MCF 10A (cell line): ENCODE measurements at regions of chr15 and their contacts with region 1.

Region 1: DNA sequence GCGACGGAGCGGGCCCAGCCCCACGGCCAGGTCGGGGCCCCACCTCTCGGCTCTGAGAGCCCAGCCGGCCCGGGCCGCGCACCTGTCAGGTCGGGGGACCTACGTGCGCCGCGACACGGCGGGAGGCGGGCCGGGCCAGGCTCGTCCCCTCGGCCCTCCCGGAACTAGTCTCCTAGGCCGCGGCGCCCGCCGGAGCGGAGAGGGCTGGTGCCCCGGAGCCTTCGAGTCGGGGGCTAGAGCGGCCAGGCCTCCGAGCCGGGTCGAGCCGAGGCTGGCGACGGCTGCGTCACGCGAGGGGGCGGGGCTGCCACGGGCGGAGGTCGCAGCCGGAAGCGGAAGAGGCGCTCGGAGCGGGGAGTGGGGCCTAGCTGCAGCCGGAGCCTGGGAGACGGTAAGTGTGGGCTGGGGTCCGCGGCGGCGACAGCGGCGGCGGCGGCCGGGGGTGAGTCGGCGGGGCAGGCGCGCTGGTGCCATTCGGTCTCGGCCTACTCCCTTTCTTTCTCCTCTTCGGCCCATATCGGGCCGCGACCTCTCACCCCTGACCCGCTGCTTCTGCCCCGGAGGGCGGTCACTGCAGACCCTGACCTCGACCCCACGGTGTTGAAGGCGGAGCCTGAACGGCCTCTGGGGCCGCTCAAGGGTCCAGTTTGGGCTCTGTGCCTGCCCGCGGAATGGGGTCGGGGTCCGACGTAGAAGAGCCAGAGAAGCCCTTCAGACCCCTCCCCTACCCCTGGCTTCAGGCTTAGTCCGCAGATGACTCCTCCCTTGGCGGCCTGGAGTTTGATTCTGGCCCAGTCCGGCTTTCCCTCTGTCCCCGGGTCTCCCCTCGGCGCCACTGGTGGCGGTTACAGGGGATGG is at the start of gene CLK3:
- DNase-seq: peak; percentile 92
- H3K4me3 Mint-ChIP-seq: peak within 1 kb of the TSS; percentile 84
- H3K27ac Mint-ChIP-seq: peak within 1 kb of the TSS; percentile 95
- H3K4me1 Mint-ChIP-seq: peaks cover 31% of the 10 kb centered on the region
- H3K27me3 Mint-ChIP-seq: peaks cover 7% of the 10 kb centered on the region
- CTCF ChIP-seq: no peak
- total RNA-seq, gene CLK3: 57.8 and 62.8 TPM in 2 replicates

Region 2: DNA sequence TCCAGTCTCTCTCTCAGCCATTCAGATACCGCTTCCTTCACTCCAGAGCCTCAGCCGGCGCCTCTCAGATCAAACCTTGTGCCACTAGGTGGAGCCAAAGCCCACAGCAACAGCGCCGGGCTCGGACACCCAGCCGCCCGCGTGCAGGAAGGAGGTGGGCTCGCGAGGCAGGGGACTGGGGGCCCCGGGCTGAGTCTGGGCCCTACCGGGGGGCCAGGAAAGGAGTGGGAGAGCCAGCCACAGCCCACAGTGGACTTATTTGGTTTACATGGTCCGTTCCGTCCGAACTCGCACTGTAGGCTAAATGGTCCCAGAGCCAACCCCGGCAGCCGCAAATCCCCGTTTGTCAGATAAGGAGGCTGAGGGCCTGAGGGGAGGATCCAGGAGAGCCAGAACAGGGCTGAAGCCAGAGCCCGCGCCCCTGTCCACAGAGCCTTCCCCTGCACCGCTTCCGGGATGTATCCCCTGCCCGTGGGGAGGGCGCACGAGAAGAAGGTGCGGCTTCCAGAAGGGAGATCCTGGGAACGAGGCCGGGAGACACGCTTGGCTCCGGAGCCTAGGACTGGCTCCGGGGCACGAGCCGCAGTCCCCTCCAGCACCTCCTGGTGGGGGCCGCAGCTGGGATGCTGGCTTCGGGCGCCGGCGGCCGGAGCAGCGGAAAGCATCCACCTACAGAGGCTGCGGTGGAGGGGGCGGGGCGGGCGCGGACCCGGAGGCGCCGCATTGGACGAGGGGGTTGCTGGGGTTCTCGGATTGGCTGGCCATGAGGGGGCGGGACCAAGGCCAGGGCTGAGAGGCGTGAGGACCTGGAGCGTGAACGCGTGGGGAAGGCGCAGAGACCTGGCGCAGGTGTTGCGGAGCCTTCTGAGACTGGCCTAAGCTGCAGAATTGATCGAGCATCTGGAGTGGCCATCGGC is 241.7 kb before region 1 on chr15:
- CTCF ChIA-PET with region 1: interaction called, 10 read pairs
- POLR2A ChIA-PET with region 1: no interaction called
- intact Hi-C with region 1: loop called (anchors 2 kb)
- DNase-seq: peak; percentile 92
- H3K4me3 Mint-ChIP-seq: peak overlapping the region; percentile 78
- H3K27ac Mint-ChIP-seq: no peak overlapping the region
- H3K4me1 Mint-ChIP-seq: no peaks in the 10 kb centered on the region
- H3K27me3 Mint-ChIP-seq: peaks cover 37% of the 10 kb centered on the region
- CTCF ChIP-seq: peak; percentile 82

Region 3: DNA sequence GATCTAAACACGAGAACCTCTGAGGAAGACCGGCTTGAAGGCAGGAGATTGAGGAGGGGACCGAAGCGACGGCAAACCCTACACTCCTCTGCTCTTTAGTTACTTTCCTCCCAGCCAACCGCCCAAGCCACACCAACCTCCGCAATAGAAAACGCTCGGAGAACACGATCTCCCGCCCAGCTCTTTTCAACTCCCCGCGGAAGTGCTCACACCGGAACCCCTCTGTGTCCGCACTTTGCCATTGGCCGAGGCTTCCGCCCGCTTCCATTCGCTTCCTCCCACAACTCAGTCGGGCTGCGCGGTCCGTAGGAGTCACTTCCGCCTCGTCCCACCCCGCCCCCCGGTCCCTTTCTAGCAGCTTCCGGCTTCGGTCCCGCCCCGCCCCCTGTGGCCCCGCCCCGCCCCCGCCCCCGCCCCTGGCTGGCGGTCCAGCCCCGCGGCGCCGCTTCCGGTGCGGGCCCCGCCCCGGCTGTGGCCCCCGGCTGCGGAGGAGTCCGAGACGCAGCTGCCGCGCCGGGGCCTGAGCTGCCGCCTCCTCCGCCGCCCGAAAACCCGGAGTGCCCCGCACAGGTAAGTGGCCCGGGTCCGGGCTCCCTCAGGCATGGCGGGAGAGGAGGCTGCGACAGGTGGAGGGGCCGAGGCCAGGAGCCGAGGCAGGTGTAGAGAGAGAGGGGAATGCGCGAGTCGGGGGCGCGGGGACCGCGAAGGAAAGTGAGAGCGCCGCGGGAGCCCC is 74.8 kb before region 1 on chr15 and contains the start of gene ARID3B:
- CTCF ChIA-PET with region 1: interaction called, 5 read pairs
- POLR2A ChIA-PET with region 1: interaction called, 71 read pairs
- intact Hi-C with region 1: loop called (anchors 2 kb)
- DNase-seq: peak; percentile 97
- H3K4me3 Mint-ChIP-seq: peak within 1 kb of the TSS; percentile 86
- H3K27ac Mint-ChIP-seq: peak within 1 kb of the TSS; percentile 86
- H3K4me1 Mint-ChIP-seq: peaks cover 40% of the 10 kb centered on the region
- H3K27me3 Mint-ChIP-seq: peaks cover 24% of the 10 kb centered on the region
- CTCF ChIP-seq: no peak
- total RNA-seq, gene ARID3B: 4.7 and 6.2 TPM in 2 replicates

Region 4: GRCh38 chr15:74589826-74590225 is 25.9 kb before region 1 on chr15:
- CTCF ChIA-PET with region 1: no interaction called
- POLR2A ChIA-PET with region 1: interaction called, 29 read pairs
- intact Hi-C with region 1: no loop called
- DNase-seq: no peak
- H3K4me3 Mint-ChIP-seq: no peak overlapping the region
- H3K27ac Mint-ChIP-seq: peak overlapping the region; percentile 39
- H3K4me1 Mint-ChIP-seq: peaks cover 6% of the 10 kb centered on the region
- H3K27me3 Mint-ChIP-seq: no peaks in the 10 kb centered on the region
- CTCF ChIP-seq: no peak

Region 5: DNA sequence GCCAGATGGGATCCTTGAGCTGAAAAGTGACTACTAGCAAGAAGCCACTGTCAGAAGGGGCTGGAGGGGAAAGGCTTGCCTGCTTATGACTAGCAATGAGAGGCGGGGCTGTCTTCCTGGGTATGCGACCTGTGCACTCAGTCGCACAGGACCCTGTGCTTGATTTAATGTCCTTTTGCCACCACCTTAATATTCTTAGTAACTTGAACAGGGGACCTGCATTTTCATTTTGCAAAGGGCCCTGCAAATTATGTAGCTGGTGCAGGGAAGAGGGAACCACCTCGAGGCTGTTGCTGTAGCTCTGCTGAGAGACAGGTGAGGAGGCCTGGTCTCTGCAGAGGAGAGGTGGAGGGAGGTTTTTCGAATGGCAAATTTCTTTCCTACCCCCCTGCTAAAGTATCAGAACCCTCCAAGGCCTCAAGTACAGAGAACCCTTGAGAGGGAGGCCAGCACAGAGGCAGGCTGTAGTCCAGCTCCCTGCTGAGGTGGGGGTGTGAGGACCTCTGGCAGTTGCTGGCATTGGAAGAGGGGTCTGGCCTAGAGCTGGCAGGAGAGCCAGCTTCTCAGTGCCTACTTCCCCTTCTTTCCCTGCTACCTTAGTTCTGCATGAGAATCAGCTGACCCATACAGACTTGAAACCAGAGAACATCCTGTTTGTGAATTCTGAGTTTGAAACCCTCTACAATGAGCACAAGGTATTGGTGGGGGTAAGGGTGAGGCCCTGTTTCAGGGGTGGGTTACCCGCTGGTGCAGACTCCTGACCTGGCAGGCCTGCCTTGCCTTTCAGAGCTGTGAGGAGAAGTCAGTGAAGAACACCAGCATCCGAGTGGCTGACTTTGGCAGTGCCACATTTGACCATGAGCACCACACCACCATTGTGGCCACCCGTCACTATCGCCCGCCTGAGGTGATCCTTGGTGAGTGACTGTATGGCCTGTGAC is 11.3 kb after region 1 on chr15:
- CTCF ChIA-PET with region 1: interaction called, 90 read pairs
- POLR2A ChIA-PET with region 1: interaction called, 12 read pairs
- intact Hi-C with region 1: no loop called
- DNase-seq: no peak
- H3K4me3 Mint-ChIP-seq: no peak overlapping the region
- H3K27ac Mint-ChIP-seq: no peak overlapping the region
- H3K4me1 Mint-ChIP-seq: no peaks in the 10 kb centered on the region
- H3K27me3 Mint-ChIP-seq: no peaks in the 10 kb centered on the region
- CTCF ChIP-seq: no peak

Region 6: GRCh38 chr15:74781431-74782258 is 165.9 kb after region 1 on chr15 and contains the start of gene CSK:
- CTCF ChIA-PET with region 1: interaction called, 16 read pairs
- POLR2A ChIA-PET with region 1: interaction called, 3 read pairs
- intact Hi-C with region 1: no loop called
- DNase-seq: peak; percentile 68
- H3K4me3 Mint-ChIP-seq: peak within 1 kb of the TSS; percentile 92
- H3K27ac Mint-ChIP-seq: peak within 1 kb of the TSS; percentile 85
- H3K4me1 Mint-ChIP-seq: peaks cover 23% of the 10 kb centered on the region
- H3K27me3 Mint-ChIP-seq: no peaks in the 10 kb centered on the region
- CTCF ChIP-seq: peak; percentile 58
- total RNA-seq, gene CSK: 50.4 and 65.3 TPM in 2 replicates

Region 7: GRCh38 chr15:74808073-74808755 is 192.5 kb after region 1 on chr15:
- CTCF ChIA-PET with region 1: no interaction called
- POLR2A ChIA-PET with region 1: no interaction called
- intact Hi-C with region 1: no loop called
- DNase-seq: peak; percentile 88
- H3K4me3 Mint-ChIP-seq: peak overlapping the region; percentile 28
- H3K27ac Mint-ChIP-seq: peak overlapping the region; percentile 5
- H3K4me1 Mint-ChIP-seq: peaks cover 31% of the 10 kb centered on the region
- H3K27me3 Mint-ChIP-seq: no peaks in the 10 kb centered on the region
- CTCF ChIP-seq: no peak